ENCODE measurements at regions of chr14 and their contacts with region 1.

Region 1: GRCh38 chr14:25150934-25151790 is 101.2 kb upstream of the STXBP6 start:
- DNase-seq: no peak
- ATAC-seq: no peak
- H3K4me3 Mint-ChIP-seq: no peak overlapping the region
- H3K27ac Mint-ChIP-seq: no peak overlapping the region
- H3K4me1 Mint-ChIP-seq: no peaks in the 10 kb centered on the region
- H3K27me3 Mint-ChIP-seq: peaks cover 12% of the 10 kb centered on the region

Region 2: GRCh38 chr14:24734878-24735500 is 416.2 kb before region 1 on chr14:
- CTCF ChIA-PET with region 1: no interaction called
- POLR2A ChIA-PET with region 1: no interaction called
- intact Hi-C with region 1: loop called in 1 of 2 experiments (anchors 5 kb)
- DNase-seq: peak; percentile 47
- ATAC-seq: peak; percentile 57
- H3K4me3 Mint-ChIP-seq: no peak overlapping the region
- H3K27ac Mint-ChIP-seq: no peak overlapping the region
- H3K4me1 Mint-ChIP-seq: no peaks in the 10 kb centered on the region
- H3K27me3 Mint-ChIP-seq: peaks cover 9% of the 10 kb centered on the region

Region 3: DNA sequence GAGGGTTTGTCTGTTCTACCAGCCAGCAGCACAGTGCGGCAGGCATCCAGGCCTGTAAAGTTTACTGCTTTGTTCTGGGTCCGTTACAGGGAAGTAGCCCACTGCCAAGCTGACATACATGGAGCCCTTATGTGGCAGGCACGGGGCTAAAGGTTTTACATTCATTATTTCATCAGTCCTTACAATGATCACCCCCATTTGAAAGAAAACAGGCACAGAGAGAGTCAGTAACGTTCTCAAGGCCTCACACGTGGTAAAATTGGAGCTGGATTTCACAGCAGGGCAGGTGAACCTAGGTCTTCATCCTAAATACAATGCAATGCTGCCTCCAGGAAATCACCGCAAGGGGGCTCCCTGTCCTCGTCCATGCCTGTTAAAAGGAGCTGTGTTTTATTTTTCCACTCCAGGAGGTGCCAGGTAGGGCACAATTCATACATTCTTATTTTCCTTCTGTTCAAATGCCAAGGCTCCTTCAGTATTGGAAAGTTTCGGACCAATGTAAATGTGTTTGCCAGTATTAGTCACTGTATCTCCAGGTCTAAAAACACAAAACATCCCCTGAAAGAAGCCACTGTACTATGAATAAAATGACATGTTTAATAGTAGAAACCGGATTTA is 345.0 kb before region 1 on chr14:
- CTCF ChIA-PET with region 1: interaction called, 5 read pairs
- POLR2A ChIA-PET with region 1: no interaction called
- intact Hi-C with region 1: loop called (anchors 1 to 5 kb)
- DNase-seq: peak; percentile 74
- ATAC-seq: no peak
- H3K4me3 Mint-ChIP-seq: no peak overlapping the region
- H3K27ac Mint-ChIP-seq: no peak overlapping the region
- H3K4me1 Mint-ChIP-seq: no peaks in the 10 kb centered on the region
- H3K27me3 Mint-ChIP-seq: peaks cover 14% of the 10 kb centered on the region

Region 4: DNA sequence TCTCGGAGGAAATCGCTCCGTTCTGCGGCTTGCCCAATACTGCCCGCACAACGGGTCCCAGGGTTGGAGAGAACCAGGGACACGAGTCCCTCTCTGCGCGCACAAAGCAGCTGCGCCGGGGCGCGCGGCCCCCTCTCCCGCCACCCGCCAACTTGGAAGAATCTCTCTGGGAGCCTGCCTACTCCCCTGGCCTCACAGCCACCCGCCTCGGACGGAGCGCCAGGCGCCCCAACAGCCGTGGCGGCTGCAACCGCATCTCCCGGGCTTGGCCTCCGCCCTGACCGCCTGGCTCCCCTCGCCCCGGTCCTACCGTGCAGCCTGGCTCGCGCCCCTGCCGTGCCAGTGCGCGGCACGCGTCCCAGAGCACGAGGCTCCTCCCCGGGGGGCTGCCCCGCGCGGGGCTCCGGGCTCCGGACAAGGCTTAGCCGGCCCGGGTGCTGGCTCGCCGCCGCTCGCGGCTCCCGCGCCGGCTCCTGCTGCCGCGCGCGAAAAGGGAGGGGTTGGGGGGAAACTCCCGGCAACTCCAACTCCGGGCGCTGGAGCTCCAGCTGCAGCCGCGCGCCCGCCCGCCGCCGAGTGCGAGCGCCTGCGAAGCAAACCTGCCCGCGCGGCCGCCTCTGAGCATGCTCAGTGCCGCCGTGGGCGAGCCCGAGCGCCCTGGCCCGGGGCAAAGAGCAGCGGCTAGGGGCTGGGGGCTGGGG is 101.4 kb before region 1 on chr14 and contains the start of gene STXBP6:
- CTCF ChIA-PET with region 1: no interaction called
- POLR2A ChIA-PET with region 1: no interaction called
- intact Hi-C with region 1: no loop called
- DNase-seq: peak; percentile 55
- ATAC-seq: peak; percentile 49
- H3K4me3 Mint-ChIP-seq: peak within 1 kb of the TSS; percentile 41
- H3K27ac Mint-ChIP-seq: no peak within 1 kb of the TSS
- H3K4me1 Mint-ChIP-seq: peaks cover 7% of the 10 kb centered on the region
- H3K27me3 Mint-ChIP-seq: peaks cover 45% of the 10 kb centered on the region
- total RNA-seq, gene STXBP6: not detected

Region 5: DNA sequence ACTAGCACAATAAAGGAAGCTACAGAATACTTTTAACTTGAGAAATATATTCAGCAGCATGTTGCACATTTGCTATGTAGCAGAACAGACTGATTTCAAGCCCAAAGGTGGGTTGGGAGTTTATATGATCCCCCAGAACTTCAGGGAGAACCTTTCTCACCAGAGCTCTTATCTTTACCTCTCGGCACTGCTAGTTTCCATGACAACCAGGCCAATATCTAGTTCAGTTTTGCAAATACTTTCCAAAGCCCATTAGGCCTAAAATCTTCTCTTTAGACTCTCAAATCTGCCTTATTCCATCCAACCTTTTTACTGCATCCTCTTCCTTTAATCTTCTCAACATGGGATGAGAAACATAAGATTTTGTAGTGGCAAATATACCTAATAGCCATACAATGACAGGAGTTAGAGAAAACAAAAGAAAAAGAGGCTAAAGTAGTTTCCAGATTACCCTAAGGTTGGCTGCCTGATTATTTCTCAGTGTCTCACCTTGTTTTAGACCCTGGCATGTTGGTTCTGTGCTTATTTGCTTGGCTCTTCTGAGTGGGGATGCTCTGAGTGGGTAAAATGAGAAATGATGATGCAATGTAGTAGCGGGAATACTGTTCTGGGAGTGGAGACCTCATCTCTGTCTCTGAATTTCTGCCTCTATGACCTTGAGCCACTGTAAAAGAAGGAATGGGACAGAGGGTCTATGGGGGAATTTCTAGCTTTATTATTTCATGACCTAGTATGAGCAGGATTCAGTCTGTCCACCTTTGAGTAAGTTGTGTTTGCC is 326.3 kb after region 1 on chr14:
- CTCF ChIA-PET with region 1: no interaction called
- POLR2A ChIA-PET with region 1: no interaction called
- intact Hi-C with region 1: no loop called
- DNase-seq: no peak
- ATAC-seq: no peak
- H3K4me3 Mint-ChIP-seq: no peak overlapping the region
- H3K27ac Mint-ChIP-seq: no peak overlapping the region
- H3K4me1 Mint-ChIP-seq: no peaks in the 10 kb centered on the region
- H3K27me3 Mint-ChIP-seq: no peaks in the 10 kb centered on the region